GM18951 (cell line): ENCODE measurements at regions of chr20 and their contacts with region 1.

Region 1: DNA sequence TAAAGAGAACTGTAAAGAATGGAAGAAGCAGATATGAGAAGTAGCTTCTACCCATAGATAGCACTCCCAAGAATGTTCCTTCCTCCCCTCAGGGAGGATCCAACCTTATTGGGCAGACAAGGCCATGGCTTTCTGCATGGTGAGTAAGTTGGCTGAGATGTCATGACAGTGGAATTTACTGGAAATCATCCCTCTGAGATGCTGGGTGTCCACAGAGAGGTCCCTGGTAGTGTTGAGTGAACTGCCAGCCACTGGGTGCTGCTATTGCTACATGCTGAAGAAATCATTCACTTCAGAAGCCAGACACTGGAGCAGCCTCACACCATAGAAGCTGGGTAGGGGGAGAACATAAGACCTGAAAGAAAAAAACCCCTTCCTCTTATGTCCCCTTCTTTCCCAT is 46.4 kb upstream of the FERMT1 start:
- POLR2A ChIP-seq: no peak

Region 2: DNA sequence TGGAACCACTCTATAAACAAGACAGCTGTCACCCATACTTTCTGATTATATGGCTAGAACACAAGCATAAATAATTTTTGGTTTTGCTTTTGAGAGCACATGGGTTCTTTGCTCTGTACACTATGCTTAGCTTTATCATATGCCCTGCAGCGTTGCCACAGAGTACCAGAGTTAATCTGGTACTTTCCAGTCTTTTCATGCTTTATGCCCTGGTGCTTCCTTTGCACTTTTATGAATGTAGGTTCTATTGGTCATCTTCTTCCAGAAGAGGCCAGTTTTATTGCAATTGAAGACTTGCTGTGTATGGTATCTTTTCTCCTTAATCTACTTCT is 398.3 kb before region 1 on chr20:
- in situ Hi-C with region 1: no loop called
- POLR2A ChIP-seq: no peak

Region 3: GRCh38 chr20:6253396-6253795 is 84.1 kb after region 1 on chr20:
- in situ Hi-C with region 1: no loop called
- POLR2A ChIP-seq: no peak

Region 4: DNA sequence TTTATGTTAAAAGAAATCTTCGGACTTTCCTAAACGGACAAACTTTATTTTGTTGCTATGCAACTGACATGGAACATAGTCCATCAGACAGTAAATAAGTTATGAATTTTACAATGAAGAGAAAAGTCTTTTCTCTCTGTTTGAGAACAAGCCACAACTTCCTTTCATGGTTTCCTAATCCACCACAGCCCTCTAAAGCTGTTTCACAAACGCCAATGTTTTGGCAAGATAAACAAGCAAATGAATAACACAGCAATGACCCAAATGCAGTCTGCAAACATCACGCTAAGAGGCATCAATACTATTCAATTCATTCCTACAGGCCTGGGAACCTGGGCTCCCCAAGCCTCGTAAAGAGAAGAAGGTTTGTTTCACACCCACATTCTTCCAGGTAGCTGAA is 1710.6 kb after region 1 on chr20:
- in situ Hi-C with region 1: loop called (anchors 25 kb)
- POLR2A ChIP-seq: no peak